Naive thymus-derived CD4-positive, alpha-beta T cell (primary cell): ENCODE measurements at regions of chr16 and their contacts with region 1.

Region 1: GRCh38 chr16:70418274-70418992 is 20.5 kb downstream of the ST3GAL2 start:
- DNase-seq: peak in 2 of 9 donors; percentile 18 to 38
- ATAC-seq: peak; percentile 22
- H3K4me3 ChIP-seq: peak overlapping the region; percentile 2
- H3K4me3 Mint-ChIP-seq: peak overlapping the region; percentile 60 to 86 (median 77)
- H3K27ac ChIP-seq: peak overlapping the region; percentile 63
- H3K27ac Mint-ChIP-seq: peak overlapping the region; percentile 71 to 92 (median 90)
- H3K4me1 ChIP-seq: peaks cover 11 to 31% of the 10 kb centered on the region in 2 donors
- H3K4me1 Mint-ChIP-seq: peaks cover 33 to 76% (median 63%) of the 10 kb centered on the region in 7 donors
- H3K27me3 ChIP-seq: no peaks in the 10 kb centered on the region
- H3K27me3 Mint-ChIP-seq: no peaks in the 10 kb centered on the region

Region 2: DNA sequence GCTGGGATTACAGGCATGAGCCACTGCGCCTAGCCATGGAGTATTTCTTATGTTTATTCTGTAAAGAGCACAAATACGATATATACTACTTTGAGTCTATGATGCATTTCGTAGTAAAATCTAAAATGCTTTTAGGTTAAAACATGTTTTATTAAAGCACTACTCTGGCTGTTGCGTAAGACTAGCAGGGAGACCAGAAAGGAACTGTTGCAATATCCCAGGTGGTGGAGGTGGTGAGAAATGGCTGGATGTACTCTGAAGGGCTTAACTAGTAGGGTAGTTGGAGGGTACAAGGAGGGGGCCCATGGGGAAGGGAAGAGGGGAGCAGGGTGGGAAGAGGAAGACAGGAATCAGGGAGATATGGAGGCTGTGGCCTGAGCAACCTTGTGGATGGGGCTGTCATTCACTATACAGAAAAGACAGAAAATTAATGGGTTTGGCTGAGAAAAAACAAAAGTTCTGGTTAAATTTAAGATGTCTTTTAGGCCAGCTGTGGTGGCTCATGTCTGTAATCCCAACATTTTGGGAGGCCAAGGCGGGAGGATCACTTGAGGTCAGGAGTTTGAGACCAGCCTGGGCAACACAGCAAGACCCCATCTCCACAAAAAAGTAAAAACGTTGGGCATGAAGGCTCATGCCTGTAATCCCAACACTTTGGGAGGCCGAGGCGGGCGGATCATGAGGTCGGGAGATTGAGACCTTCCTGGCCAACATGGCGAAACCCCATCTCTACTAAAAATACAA is 15.3 kb before region 1 on chr16:
- CTCF ChIA-PET with region 1: no interaction called
- POLR2A ChIA-PET with region 1: interaction called, 5 read pairs
- intact Hi-C with region 1: loop called in 1 of 2 experiments (anchors 1 kb)
- DNase-seq: no peak
- ATAC-seq: no peak
- H3K4me3 ChIP-seq: no peak overlapping the region
- H3K4me3 Mint-ChIP-seq: peak overlapping the region; percentile 6 to 92 (median 30)
- H3K27ac ChIP-seq: no peak overlapping the region
- H3K27ac Mint-ChIP-seq: peak overlapping the region in 6 of 9 donors; percentile 14 to 90 (median 50)
- H3K4me1 ChIP-seq: peaks cover 13 to 26% of the 10 kb centered on the region in 2 donors
- H3K4me1 Mint-ChIP-seq: peaks cover 38 to 69% (median 47%) of the 10 kb centered on the region in 7 donors
- H3K27me3 ChIP-seq: no peaks in the 10 kb centered on the region
- H3K27me3 Mint-ChIP-seq: no peaks in the 10 kb centered on the region

Region 3: DNA sequence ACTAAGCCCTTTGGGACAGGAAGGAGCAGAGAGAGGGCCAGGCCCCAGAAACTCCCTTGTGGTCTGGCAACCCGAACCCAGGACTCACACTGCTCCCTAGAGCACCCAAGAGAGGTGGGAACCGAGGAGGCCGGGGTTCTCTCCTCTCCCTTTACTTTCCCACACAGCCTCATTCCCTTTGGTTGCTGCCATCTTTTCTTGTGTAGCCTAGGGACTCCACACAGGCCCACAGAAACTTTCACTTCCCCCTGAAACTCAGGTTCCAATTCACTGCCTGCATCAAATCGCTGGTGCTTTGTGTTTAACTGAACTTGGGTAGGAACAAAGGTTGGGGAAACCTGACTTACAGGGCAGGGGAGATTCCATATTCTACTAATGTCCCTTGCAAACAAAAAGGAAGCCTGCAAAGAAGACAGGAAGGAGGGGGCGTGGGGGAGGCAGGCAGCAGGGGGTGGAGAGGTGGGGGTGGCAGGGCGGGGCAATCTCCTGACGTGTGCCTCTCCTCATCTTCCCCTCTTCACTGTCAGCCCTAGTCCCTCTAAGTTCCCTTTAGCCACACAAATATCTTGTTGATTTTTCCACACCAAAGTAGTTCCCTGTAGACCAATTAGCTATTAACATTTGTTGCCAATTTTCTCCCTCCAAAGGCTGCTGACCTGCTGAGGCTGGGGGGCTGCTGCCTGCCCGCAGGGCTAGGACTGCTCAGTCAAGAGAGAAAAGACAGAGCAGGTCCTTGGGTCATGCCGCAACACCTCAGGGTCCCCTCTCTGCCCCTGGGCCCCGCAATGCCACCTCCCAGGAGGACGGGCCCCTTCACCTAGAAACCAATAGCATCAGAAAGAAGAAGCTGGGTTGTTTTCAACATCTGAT is 12.5 kb after region 1 on chr16:
- CTCF ChIA-PET with region 1: interaction called, 6 read pairs
- POLR2A ChIA-PET with region 1: no interaction called
- intact Hi-C with region 1: loop called in 1 of 2 experiments (anchors 2 kb)
- DNase-seq: peak in 8 of 9 donors; percentile 49 to 85 (median 64)
- ATAC-seq: peak; percentile 89
- H3K4me3 ChIP-seq: peak overlapping the region; percentile 29
- H3K4me3 Mint-ChIP-seq: peak overlapping the region; percentile 60 to 86 (median 78)
- H3K27ac ChIP-seq: peak overlapping the region; percentile 91
- H3K27ac Mint-ChIP-seq: peak overlapping the region; percentile 84 to 98 (median 93)
- H3K4me1 ChIP-seq: peaks cover 20 to 32% of the 10 kb centered on the region in 2 donors
- H3K4me1 Mint-ChIP-seq: peaks cover 47 to 78% (median 70%) of the 10 kb centered on the region in 7 donors
- H3K27me3 ChIP-seq: no peaks in the 10 kb centered on the region
- H3K27me3 Mint-ChIP-seq: no peaks in the 10 kb centered on the region

Region 4: DNA sequence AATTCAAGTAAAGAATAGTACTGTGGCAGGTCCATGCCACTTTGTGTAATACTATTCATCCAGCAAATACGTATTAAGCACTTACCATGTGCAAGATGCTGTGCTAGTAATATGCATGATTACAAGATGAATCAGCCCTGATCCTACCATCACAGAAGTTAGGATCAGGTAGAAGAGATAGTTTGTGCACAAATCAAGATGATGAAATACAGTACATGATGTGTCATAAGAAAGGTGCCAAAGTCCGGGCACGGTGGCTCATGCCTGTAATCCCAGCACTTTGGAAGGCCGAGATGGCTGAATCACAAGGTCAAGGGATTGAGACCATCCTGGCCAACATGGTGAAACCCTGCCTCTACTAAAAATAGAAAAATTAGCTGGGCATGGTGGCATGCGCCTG is 94.0 kb after region 1 on chr16:
- CTCF ChIA-PET with region 1: no interaction called
- POLR2A ChIA-PET with region 1: no interaction called
- intact Hi-C with region 1: no loop called
- DNase-seq: no peak
- ATAC-seq: no peak
- H3K4me3 ChIP-seq: no peak overlapping the region
- H3K4me3 Mint-ChIP-seq: no peak overlapping the region
- H3K27ac ChIP-seq: no peak overlapping the region
- H3K27ac Mint-ChIP-seq: no peak overlapping the region
- H3K4me1 ChIP-seq: no peaks in the 10 kb centered on the region
- H3K4me1 Mint-ChIP-seq: peaks cover 4 to 13% (median 9%) of the 10 kb centered on the region in 7 donors
- H3K27me3 ChIP-seq: no peaks in the 10 kb centered on the region
- H3K27me3 Mint-ChIP-seq: no peaks in the 10 kb centered on the region